Activated T-helper 1 cell treated with anti-CD3 and anti-CD28 coated beads, Interleukin-12 subunit alpha, Interleukin-12 subunit beta, Interleukin-2, Interleukin-4 antibody, amounts not matched to agents 30 ng/mL and 10 ng/mL and 1 ng/mL, durations not matched to agents 14 hours and 24 hours and 36 hours (primary cell): ENCODE measurements at regions of chr20 and their contacts with region 1.

Region 1: DNA sequence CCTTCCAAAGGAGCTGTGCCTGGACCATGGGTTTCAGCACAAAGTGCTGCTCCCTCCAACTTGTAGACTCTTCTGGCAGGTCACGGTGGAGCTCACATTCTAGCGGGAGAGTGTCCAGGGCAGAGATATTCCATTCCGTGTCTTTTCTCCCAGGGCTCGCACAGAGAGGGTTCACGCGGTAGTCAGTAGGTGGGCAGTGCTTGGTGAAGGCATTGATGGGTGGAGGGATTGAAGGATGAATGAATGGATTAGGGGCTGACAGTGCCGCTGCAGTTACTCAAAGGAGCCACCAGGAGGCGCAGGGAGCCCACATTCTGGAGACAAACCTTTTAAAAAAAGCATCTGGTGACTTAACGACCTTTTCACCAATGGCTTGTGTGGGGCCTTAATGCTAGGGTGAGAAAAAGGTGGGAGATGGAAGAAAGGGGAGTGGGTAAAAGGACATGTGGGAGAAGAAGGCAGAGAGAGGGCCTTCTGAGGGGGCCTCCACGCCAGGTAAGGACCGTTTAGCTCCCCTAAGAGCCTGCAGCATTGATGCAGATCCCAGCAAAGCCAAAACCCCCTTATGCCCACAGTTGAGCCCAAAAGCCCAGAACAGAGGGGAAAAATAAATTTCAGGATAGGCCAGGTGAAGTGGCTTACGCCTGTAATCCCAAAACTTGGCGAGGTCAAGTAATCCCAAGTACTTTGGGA is 17.5 kb upstream of the FAM110A start:
- DNase-seq: peak; percentile 48
- H3K4me3 Mint-ChIP-seq: no peak overlapping the region
- H3K27ac Mint-ChIP-seq: no peak overlapping the region
- H3K4me1 Mint-ChIP-seq: peaks cover 15% of the 10 kb centered on the region
- H3K27me3 Mint-ChIP-seq: peaks cover 14% of the 10 kb centered on the region

Region 2: GRCh38 chr20:675453-676314 is 140.4 kb before region 1 on chr20 and contains the start of gene SCRT2:
- intact Hi-C with region 1: no loop called
- DNase-seq: peak; percentile 58
- H3K4me3 Mint-ChIP-seq: no peak within 1 kb of the TSS
- H3K27ac Mint-ChIP-seq: peak within 1 kb of the TSS; percentile 31
- H3K4me1 Mint-ChIP-seq: peaks cover 6% of the 10 kb centered on the region
- H3K27me3 Mint-ChIP-seq: peaks cover 48% of the 10 kb centered on the region
- total RNA-seq, gene SCRT2: not detected in 2 replicates

Region 3: GRCh38 chr20:768426-768978 is 47.6 kb before region 1 on chr20 and contains the start of gene SLC52A3:
- intact Hi-C with region 1: no loop called
- DNase-seq: no peak
- H3K4me3 Mint-ChIP-seq: no peak within 1 kb of the TSS
- H3K27ac Mint-ChIP-seq: no peak within 1 kb of the TSS
- H3K4me1 Mint-ChIP-seq: no peaks in the 10 kb centered on the region
- H3K27me3 Mint-ChIP-seq: peaks cover 4% of the 10 kb centered on the region
- total RNA-seq, gene SLC52A3: not detected in 2 replicates

Region 4: DNA sequence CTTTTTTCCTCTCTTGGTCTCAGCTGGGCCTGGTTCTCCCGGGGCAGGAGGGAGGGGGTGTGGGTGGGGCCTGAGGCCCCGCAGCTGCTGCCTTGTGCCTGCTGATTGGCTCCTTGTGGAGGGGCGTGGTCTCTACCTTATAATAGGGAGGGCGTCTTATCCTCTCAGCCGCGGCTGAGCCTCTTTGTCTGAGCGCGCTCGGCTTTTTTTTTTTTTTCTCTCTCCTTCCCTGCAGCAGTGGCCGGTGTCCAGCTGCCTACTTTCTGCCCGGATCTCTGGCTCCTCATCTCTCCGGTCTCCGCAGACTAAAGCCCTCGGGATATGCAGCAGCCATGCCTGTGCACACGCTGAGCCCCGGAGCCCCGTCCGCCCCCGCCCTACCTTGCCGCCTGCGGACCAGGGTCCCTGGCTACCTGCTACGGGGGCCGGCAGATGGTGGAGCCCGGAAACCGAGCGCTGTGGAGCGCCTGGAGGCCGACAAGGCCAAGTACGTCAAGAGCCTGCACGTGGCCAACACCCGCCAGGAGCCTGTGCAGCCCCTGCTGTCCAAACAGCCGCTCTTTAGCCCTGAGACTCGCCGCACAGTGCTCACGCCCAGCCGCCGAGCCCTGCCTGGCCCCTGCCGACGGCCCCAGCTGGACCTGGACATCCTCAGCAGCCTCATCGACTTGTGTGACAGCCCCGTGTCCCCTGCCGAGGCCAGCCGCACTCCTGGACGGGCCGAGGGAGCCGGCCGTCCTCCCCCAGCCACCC is 28.6 kb after region 1 on chr20:
- intact Hi-C with region 1: loop called (anchors 1 kb)
- DNase-seq: peak; percentile 78
- H3K4me3 Mint-ChIP-seq: peak overlapping the region; percentile 86
- H3K27ac Mint-ChIP-seq: peak overlapping the region; percentile 70
- H3K4me1 Mint-ChIP-seq: peaks cover 48% of the 10 kb centered on the region
- H3K27me3 Mint-ChIP-seq: no peaks in the 10 kb centered on the region

Region 5: DNA sequence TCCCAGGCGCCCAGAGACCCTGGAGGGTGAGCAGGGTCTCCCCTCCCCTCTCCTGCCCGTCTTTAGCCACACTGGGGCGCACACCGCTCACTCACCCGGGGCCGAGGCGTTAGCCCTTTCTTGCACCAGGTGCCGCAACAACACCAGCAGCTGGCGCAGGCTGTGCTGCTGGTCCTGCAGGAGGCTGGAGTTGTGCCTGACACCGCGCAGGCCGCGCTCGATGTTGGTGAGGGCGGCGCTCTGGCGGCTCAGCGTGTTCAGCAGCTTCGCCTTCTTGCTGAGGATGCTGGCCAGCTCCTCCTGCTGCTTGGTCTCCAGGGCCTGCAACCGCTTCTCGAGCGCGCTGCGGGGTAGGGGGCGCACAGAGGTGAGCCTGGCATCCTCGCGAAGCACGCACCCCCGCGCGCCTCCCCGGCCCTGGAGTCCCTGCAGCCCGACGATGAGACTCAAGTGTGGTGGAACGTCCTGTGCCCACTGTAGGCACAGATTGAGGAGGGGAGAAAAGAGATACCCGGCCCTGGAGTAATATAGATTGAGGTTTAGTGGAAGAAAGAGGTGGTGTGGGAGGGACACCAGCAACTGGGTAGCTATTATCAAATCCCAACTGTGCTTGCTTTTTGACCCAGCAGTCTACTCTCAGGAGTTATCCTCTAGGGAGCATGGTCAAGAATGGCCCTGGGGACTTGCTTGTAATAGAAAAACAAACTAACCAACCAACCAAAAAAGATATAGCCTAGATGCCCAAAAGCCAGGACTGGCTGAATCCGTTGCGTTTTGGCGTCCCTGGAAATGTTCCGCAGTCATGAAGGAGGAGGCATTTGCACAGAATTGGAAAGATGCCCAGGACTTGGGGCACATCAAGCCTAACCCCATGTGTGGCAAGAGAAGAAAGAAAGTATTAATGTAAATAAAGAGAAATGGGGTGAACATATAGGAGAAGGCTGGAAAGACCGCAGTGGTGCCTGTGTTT is 69.2 kb after region 1 on chr20:
- intact Hi-C with region 1: loop called (anchors 5 kb)
- DNase-seq: no peak
- H3K4me3 Mint-ChIP-seq: no peak overlapping the region
- H3K27ac Mint-ChIP-seq: no peak overlapping the region
- H3K4me1 Mint-ChIP-seq: peaks cover 20% of the 10 kb centered on the region
- H3K27me3 Mint-ChIP-seq: peaks cover 16% of the 10 kb centered on the region

Region 6: DNA sequence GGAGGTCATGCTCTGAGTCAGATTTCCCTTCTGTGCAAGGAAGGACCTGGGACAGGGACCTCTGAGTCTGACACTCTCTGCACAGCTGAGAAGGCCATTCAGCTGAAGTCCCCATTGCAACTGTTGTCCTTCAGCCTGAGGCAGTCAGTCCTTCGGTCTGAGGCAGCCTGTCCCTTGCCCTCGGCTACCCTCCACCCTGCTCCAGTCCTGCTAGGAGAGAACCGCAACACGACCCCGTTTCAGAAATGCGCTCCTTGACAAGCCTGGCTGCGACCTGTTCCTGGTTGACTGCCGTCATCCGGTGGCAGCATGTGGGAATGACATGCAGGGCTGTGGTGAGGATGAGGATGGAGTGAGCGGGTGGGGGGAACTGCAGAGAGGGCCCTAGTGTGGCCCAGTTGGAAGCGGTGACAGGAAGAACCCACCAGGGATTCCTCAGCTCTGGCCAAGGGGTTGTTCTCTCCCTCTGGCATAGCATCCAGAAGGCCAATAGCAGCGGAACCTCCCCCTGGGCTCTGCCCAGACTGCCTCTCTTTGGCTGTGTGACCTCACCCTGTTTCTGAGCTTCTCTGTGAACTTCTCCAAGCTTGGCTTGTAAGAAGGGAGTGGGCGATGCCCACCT is 140.4 kb after region 1 on chr20:
- intact Hi-C with region 1: loop called (anchors 1 kb)
- DNase-seq: peak; percentile 65
- H3K4me3 Mint-ChIP-seq: no peak overlapping the region
- H3K27ac Mint-ChIP-seq: no peak overlapping the region
- H3K4me1 Mint-ChIP-seq: no peaks in the 10 kb centered on the region
- H3K27me3 Mint-ChIP-seq: peaks cover 20% of the 10 kb centered on the region

Region 7: GRCh38 chr20:973785-974194 is 157.7 kb after region 1 on chr20:
- intact Hi-C with region 1: loop called (anchors 1 kb)
- DNase-seq: peak; percentile 11
- H3K4me3 Mint-ChIP-seq: no peak overlapping the region
- H3K27ac Mint-ChIP-seq: no peak overlapping the region
- H3K4me1 Mint-ChIP-seq: no peaks in the 10 kb centered on the region
- H3K27me3 Mint-ChIP-seq: peaks cover 5% of the 10 kb centered on the region

Region 8: DNA sequence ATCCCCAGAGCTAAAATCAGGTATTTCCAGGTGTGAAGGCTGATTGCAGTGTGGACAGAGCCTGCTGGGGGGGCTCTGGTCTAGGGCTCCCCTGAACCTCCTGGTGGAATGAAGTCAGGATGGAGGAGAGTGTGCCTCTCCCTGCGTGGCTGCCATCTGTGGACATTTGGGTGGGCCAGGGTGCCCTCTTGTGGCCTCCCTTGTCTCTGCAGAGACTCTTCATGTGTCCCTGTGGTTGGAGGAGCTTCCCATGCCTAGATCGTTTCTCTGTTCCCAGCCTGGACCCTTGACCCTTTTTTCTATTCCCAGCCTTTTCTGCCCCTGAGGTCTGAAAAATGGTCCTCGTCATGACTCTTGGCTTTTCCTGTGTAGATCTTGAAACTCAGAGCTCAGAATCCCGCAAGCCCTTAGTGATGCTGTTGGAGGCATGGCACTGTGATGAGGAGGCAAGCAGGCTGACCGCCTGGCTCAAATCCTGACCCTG is 292.4 kb after region 1 on chr20:
- intact Hi-C with region 1: loop called (anchors 1 kb)
- DNase-seq: peak; percentile 25
- H3K4me3 Mint-ChIP-seq: no peak overlapping the region
- H3K27ac Mint-ChIP-seq: no peak overlapping the region
- H3K4me1 Mint-ChIP-seq: peaks cover 5% of the 10 kb centered on the region
- H3K27me3 Mint-ChIP-seq: peaks cover 5% of the 10 kb centered on the region